Sigmoid colon (tissue), 7 donors: ENCODE measurements at regions of chr3 and their contacts with region 1.

Region 1: DNA sequence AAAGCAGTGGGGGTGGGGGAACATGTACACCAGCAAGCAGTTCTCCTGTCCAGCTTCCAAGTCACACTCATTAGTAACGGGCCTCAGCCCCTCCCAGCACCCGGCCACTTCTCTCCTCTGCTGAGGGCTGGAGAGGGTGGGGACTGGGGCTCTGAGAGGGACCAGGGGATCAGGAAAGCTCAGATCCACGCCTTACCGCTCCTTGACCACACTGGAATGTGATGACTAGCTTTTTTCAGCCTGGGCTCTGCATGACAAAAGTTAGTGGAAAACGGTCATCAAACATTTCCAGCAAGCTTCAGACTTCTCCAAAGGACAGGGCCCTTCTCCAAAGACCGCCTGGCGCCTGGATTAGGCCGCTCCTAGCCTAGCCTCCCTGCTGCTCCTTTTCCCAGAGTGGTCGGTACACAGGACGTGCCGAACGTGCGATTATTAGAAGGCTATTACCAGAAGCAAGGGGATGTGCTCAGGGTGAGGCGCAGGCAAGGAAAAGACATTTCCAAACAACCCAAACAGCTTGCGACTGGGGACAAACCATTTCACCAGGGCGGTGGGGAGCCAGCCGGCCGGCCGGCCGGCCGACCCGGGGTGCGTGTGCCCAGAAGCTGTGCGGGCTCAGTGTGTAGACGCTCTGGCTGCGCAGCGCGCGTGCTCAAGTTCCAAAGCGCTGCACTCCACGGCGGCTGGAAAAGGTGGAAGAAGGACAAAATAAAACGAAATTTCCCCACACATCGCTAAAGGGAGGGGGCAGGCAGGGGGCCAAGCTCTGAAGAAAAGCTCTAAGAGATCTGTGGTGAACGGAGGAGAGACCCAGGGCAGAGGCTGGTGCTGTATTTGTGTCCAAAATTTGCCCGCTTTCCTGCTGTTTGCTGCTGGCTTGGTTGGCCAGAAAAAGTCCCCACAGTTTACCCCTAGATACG is 51.0 kb upstream of the SSR3 start:
- DNase-seq: peak; percentile 71
- H3K4me3 ChIP-seq: peak overlapping the region; percentile 15 to 49 (median 46)
- H3K27ac ChIP-seq: peak overlapping the region; percentile 64 to 86 (median 78)
- H3K4me1 ChIP-seq: peaks cover 0 to 47% (median 19%) of the 10 kb centered on the region in 4 donors
- H3K27me3 ChIP-seq: no peaks in the 10 kb centered on the region
- CTCF ChIP-seq: no peak
- EP300 ChIP-seq: no peak
- POLR2A ChIP-seq: peak in 1 of 2 donors; percentile 12

Region 2: GRCh38 chr3:155880286-155880685 is 725.7 kb before region 1 on chr3:
- intact Hi-C with region 1: no loop called
- DNase-seq: no peak
- H3K4me3 ChIP-seq: no peak overlapping the region
- H3K27ac ChIP-seq: no peak overlapping the region
- H3K4me1 ChIP-seq: peaks cover 0 to 10% (median 3%) of the 10 kb centered on the region in 4 donors
- H3K27me3 ChIP-seq: no peaks in the 10 kb centered on the region
- CTCF ChIP-seq: no peak
- EP300 ChIP-seq: no peak
- POLR2A ChIP-seq: no peak

Region 3: GRCh38 chr3:156547637-156548036 is 58.3 kb before region 1 on chr3:
- intact Hi-C with region 1: loop called (anchors 5 kb)
- DNase-seq: no peak
- H3K4me3 ChIP-seq: no peak overlapping the region
- H3K27ac ChIP-seq: peak overlapping the region; percentile 65 to 77 (median 72)
- H3K4me1 ChIP-seq: peaks cover 0 to 100% (median 80%) of the 10 kb centered on the region in 4 donors
- H3K27me3 ChIP-seq: no peaks in the 10 kb centered on the region
- CTCF ChIP-seq: no peak
- EP300 ChIP-seq: peak in 1 of 4 donors; percentile 62
- POLR2A ChIP-seq: no peak

Region 4: DNA sequence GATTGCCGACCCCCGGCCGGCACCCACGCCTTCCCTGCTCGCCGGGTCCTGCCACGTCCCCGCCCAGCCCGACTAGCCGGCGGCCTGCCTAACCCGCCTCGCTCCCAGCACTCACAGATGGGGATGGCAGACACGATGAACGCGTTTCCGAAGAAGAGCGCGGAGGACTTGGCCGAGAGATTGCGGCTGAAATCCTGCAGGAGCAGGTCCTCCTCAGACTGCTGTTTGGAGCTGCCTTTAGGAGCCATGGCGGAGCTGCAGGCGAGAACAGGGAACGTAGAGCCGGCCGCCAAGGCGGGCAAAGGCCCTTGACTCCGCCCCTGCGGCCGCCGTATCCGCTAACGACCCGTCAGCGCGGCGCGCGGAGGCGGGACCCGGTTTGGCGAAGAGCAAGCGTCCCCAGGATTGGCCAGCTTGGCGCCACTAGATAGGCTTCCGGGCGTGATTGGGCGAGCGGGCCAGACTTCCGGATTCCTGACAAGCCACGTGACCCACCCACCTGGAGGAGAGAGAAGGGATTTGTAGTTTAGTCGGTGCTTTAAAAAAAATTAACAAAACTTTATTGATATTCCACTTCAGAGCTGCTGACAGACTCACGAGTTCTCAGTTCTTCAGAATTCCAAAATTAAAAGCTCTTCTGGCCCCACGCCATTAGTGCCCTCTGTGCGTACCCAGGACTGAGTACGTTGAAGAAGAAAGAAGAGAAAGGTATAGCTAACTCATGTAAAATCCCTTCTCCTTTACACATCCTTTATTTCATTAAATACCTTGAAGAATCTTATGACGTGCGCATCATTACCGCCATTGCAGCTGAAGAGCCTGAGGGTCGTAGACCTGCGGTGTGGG is 50.9 kb before region 1 on chr3 and contains the start of gene SSR3:
- intact Hi-C with region 1: loop called (anchors 5 kb)
- DNase-seq: peak; percentile 100
- H3K4me3 ChIP-seq: peak within 1 kb of the TSS; percentile 73 to 91 (median 84)
- H3K27ac ChIP-seq: peak within 1 kb of the TSS; percentile 83 to 90 (median 88)
- H3K4me1 ChIP-seq: peaks cover 0 to 40% (median 36%) of the 10 kb centered on the region in 4 donors
- H3K27me3 ChIP-seq: no peaks in the 10 kb centered on the region
- CTCF ChIP-seq: peak; percentile 46 to 78 (median 60)
- EP300 ChIP-seq: peak in 1 of 4 donors; percentile 6
- POLR2A ChIP-seq: peak; percentile 85 to 92
- total RNA-seq, gene SSR3: 78.1 to 113 (median 90.4) TPM